Activated naive CD4-positive, alpha-beta T cell treated with anti-CD3 and anti-CD28 coated beads for 36 hours (primary cell): ENCODE measurements at regions of chr21 and their contacts with region 1.

Region 1: GRCh38 chr21:38159355-38159754 is 97.4 kb upstream of the KCNJ15 start:
- DNase-seq: peak; percentile 76
- H3K4me3 Mint-ChIP-seq: no peak overlapping the region
- H3K27ac Mint-ChIP-seq: no peak overlapping the region
- H3K4me1 Mint-ChIP-seq: no peaks in the 10 kb centered on the region
- H3K27me3 Mint-ChIP-seq: peaks cover 16% of the 10 kb centered on the region

Region 2: GRCh38 chr21:38170280-38170679 is 10.9 kb after region 1 on chr21:
- CTCF ChIA-PET with region 1: interaction called, 14 read pairs
- intact Hi-C with region 1: no loop called
- DNase-seq: peak; percentile 41
- H3K4me3 Mint-ChIP-seq: no peak overlapping the region
- H3K27ac Mint-ChIP-seq: no peak overlapping the region
- H3K4me1 Mint-ChIP-seq: no peaks in the 10 kb centered on the region
- H3K27me3 Mint-ChIP-seq: no peaks in the 10 kb centered on the region

Region 3: GRCh38 chr21:38937844-38938742 is 778.7 kb after region 1 on chr21:
- CTCF ChIA-PET with region 1: no interaction called
- intact Hi-C with region 1: no loop called
- DNase-seq: peak; percentile 54
- H3K4me3 Mint-ChIP-seq: no peak overlapping the region
- H3K27ac Mint-ChIP-seq: peak overlapping the region; percentile 11
- H3K4me1 Mint-ChIP-seq: peaks cover 10% of the 10 kb centered on the region
- H3K27me3 Mint-ChIP-seq: peaks cover 2% of the 10 kb centered on the region